ENCODE measurements at regions of chr19 and their contacts with region 1.

Region 1: GRCh38 chr19:1235625-1236538 is 1.9 kb downstream of the CBARP start:
- DNase-seq: no peak
- ATAC-seq: no peak
- H3K4me3 Mint-ChIP-seq: peak overlapping the region; percentile 41
- H3K27ac Mint-ChIP-seq: no peak overlapping the region
- H3K4me1 Mint-ChIP-seq: peaks cover 12% of the 10 kb centered on the region
- H3K27me3 Mint-ChIP-seq: peaks cover 2% of the 10 kb centered on the region; the same call in 1 of the 2 replicates
- CTCF ChIP-seq: no peak

Region 2: DNA sequence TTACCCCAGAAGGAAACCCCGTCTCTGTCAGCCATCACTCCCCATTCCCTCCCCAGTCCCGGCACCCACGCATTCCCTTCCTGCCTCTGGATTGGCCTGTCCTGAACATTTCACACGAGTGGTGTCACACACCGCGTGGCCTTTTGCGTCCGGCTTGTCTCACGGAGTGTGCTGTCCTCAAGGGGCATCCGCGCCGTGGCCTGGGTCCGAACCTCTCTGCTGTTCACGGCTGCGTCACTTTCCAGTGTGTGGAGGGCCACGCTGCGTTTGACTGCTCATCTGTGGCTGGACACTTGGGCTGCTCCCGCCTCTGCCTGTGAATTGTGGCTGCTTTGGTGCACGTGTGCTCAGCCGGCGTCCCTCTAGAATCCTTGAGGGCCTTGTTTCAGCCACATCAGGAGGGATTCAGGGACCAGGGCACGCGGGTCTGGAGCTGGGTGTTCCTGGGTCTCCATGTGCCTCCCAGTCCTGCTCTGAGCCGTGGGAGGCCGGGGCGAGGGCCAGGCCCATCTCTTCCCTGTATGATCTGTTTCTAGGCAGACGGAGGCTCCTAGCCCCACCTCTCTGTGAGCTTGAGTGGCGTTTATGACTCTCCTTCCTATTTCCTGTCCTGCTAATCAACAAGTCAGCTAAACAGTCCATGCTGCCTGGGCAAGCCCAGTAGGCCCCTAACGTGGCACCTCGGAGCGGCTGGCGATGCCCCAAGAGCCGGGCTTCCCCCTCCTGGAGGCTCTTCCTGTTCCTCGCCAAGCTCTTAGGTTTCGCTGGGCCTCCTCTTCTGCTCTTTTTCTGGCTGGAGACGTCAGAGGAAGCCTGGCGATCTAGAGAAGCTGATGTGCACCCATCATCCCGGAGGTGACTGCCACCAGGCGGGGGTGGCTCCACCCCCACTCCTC is 22.2 kb before region 1 on chr19:
- CTCF ChIA-PET with region 1: interaction called, 7 read pairs
- POLR2A ChIA-PET with region 1: interaction called, 14 read pairs
- DNase-seq: no peak
- ATAC-seq: no peak
- H3K4me3 Mint-ChIP-seq: no peak overlapping the region
- H3K27ac Mint-ChIP-seq: peak overlapping the region; percentile 73
- H3K4me1 Mint-ChIP-seq: peaks cover 44% of the 10 kb centered on the region
- H3K27me3 Mint-ChIP-seq: no peaks in the 10 kb centered on the region
- CTCF ChIP-seq: no peak